B cell (primary cell): ENCODE measurements at regions of chr4 and their contacts with region 1.

Region 1: GRCh38 chr4:86043755-86044592 is 315.9 kb downstream of the MAPK10 start:
- DNase-seq: peak; percentile 69
- ATAC-seq: peak; percentile 51
- H3K4me3 ChIP-seq: no peak overlapping the region
- H3K4me3 Mint-ChIP-seq: no peak overlapping the region
- H3K27ac ChIP-seq: no peak overlapping the region
- H3K27ac Mint-ChIP-seq: no peak overlapping the region
- H3K4me1 ChIP-seq: no peaks in the 10 kb centered on the region
- H3K4me1 Mint-ChIP-seq: no peaks in the 10 kb centered on the region
- H3K27me3 ChIP-seq: no peaks in the 10 kb centered on the region
- H3K27me3 Mint-ChIP-seq: no peaks in the 10 kb centered on the region
- CTCF ChIP-seq: peak; percentile 89

Region 2: DNA sequence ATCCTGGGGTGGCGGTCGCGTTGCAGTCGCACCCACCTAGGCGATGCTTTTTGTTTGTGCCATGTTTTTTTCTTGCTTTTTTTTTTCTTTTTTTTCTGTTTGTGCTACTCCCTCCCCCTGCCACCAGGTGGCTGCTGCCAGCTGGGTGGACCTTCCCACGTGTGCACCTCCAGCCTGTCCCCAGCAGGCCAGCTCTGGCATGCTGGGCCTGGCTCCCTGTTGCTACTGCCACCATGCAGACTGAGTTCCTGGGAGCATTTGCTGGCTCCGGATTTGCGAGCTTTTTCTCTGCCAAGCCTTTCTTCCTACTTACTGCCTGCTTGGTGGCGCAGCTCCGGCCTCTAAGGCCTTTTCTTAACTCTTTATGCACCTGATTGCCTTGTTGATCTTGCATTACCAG is 916.3 kb before region 1 on chr4:
- CTCF ChIA-PET with region 1: interaction called, 4 read pairs
- POLR2A ChIA-PET with region 1: no interaction called
- intact Hi-C with region 1: loop called (anchors 5 kb)
- DNase-seq: peak; percentile 50
- ATAC-seq: peak; percentile 58
- H3K4me3 ChIP-seq: no peak overlapping the region
- H3K4me3 Mint-ChIP-seq: no peak overlapping the region
- H3K27ac ChIP-seq: no peak overlapping the region
- H3K27ac Mint-ChIP-seq: no peak overlapping the region
- H3K4me1 ChIP-seq: no peaks in the 10 kb centered on the region
- H3K4me1 Mint-ChIP-seq: peaks cover 2% of the 10 kb centered on the region
- H3K27me3 ChIP-seq: no peaks in the 10 kb centered on the region
- H3K27me3 Mint-ChIP-seq: peaks cover 7% of the 10 kb centered on the region
- CTCF ChIP-seq: peak; percentile 70

Region 3: DNA sequence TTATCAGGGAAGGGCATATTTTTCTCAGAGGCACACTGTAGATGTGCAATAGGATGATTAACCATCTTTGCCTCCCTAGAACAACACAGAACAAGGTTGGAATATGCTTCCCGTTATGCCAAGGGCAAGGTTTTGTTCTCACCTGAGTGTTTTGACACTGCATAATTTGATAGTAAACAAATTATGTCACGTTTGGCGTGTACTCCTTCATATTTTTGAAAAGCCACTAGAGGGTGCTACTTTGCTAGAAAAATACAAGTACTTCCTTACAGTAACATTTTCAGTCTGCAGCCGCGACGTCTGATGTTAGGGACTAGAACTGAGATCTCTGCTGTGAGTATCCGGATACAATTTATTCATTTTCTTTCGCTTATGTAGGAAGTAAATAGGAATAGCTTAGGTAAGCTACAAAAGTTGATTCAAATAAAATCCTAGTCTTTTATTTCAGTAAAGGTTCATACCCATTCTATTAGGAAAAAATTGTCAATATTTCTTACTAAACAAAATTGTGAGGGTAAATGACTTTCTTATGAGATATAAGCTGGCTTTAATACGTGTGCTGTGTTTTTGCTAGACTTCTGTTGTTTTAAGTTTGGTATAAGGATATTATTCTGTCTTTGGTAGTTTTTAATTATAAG is 896.4 kb before region 1 on chr4:
- CTCF ChIA-PET with region 1: interaction called, 60 read pairs
- POLR2A ChIA-PET with region 1: no interaction called
- intact Hi-C with region 1: loop called (anchors 1 kb)
- DNase-seq: peak; percentile 82
- ATAC-seq: peak; percentile 83
- H3K4me3 ChIP-seq: no peak overlapping the region
- H3K4me3 Mint-ChIP-seq: no peak overlapping the region
- H3K27ac ChIP-seq: no peak overlapping the region
- H3K27ac Mint-ChIP-seq: no peak overlapping the region
- H3K4me1 ChIP-seq: peaks cover 0 to 2% of the 10 kb centered on the region in 2 donors
- H3K4me1 Mint-ChIP-seq: peaks cover 6% of the 10 kb centered on the region
- H3K27me3 ChIP-seq: no peaks in the 10 kb centered on the region
- H3K27me3 Mint-ChIP-seq: no peaks in the 10 kb centered on the region
- CTCF ChIP-seq: peak; percentile 90

Region 4: GRCh38 chr4:85756938-85757337 is 287.0 kb before region 1 on chr4:
- CTCF ChIA-PET with region 1: interaction called, 3 read pairs
- POLR2A ChIA-PET with region 1: no interaction called
- intact Hi-C with region 1: loop called (anchors 2 kb)
- DNase-seq: no peak
- ATAC-seq: peak; percentile 36
- H3K4me3 ChIP-seq: no peak overlapping the region
- H3K4me3 Mint-ChIP-seq: no peak overlapping the region
- H3K27ac ChIP-seq: no peak overlapping the region
- H3K27ac Mint-ChIP-seq: no peak overlapping the region
- H3K4me1 ChIP-seq: peaks cover 0 to 7% of the 10 kb centered on the region in 2 donors
- H3K4me1 Mint-ChIP-seq: peaks cover 14% of the 10 kb centered on the region
- H3K27me3 ChIP-seq: no peaks in the 10 kb centered on the region
- H3K27me3 Mint-ChIP-seq: no peaks in the 10 kb centered on the region
- CTCF ChIP-seq: peak; percentile 31

Region 5: DNA sequence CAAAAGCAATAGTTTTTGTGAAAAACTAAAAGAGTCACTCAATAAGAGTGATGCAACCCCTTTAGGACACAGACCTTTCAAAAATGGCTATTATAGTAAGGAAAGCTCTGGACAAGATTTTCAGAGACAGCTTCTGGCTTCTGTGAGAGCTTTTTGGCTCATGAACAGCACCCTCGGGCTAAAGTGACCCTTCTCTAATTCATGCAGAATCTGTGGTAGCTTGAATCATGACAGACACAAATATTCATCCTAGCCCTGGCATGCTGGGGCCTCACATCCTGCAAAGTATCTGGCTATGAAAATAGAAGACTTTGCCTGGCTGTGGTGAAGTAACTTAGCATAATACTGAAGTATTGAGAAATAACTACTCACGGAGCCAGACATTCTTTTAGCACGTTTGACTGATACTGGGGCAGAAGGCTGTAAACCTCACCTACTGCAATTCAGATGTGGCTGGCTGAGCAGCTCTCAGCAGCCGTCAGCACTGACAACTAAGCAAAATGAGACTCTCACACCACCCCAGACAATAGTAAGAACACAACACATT is 11.4 kb before region 1 on chr4:
- CTCF ChIA-PET with region 1: interaction called, 16 read pairs
- POLR2A ChIA-PET with region 1: no interaction called
- intact Hi-C with region 1: no loop called
- DNase-seq: no peak
- ATAC-seq: no peak
- H3K4me3 ChIP-seq: no peak overlapping the region
- H3K4me3 Mint-ChIP-seq: no peak overlapping the region
- H3K27ac ChIP-seq: no peak overlapping the region
- H3K27ac Mint-ChIP-seq: no peak overlapping the region
- H3K4me1 ChIP-seq: no peaks in the 10 kb centered on the region
- H3K4me1 Mint-ChIP-seq: no peaks in the 10 kb centered on the region
- H3K27me3 ChIP-seq: peaks cover 0 to 15% (median 3%) of the 10 kb centered on the region in 4 experiments
- H3K27me3 Mint-ChIP-seq: peaks cover 31% of the 10 kb centered on the region
- CTCF ChIP-seq: no peak

Region 6: DNA sequence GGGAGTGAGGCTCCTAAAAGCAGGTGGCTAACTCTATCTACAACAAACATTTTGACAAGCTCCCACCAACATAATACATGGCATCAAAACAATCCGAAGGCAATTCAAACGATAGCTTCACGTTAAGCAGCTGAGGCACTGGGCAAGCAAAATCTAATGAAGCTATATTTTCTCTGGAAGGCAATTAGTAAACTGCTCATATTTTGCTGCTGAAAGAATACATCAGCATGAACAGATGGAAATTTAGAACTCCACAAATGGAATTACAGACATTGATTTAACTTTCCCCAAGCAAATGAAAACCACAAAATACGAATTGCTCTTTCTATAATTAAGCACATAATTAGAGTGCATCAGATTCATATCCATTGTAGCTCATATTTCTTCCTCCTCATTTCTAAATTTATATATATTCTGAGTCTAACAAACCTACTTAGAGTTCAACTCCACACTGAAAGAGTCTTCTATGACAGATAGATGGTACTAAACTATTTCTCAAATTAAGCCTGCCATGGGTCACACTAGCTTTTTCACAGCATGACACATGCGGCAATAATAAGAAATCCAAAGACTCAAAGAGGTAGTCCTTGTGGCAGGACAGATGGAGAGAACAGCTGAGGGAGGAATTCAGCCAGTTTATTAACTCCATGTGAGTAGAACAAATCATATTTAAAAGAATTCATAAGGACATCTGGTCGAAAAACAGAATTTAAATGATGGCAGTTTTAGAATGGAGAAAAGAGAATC is 10.5 kb after region 1 on chr4:
- CTCF ChIA-PET with region 1: interaction called, 15 read pairs
- POLR2A ChIA-PET with region 1: no interaction called
- intact Hi-C with region 1: no loop called
- DNase-seq: no peak
- ATAC-seq: no peak
- H3K4me3 ChIP-seq: no peak overlapping the region
- H3K4me3 Mint-ChIP-seq: no peak overlapping the region
- H3K27ac ChIP-seq: no peak overlapping the region
- H3K27ac Mint-ChIP-seq: no peak overlapping the region
- H3K4me1 ChIP-seq: no peaks in the 10 kb centered on the region
- H3K4me1 Mint-ChIP-seq: no peaks in the 10 kb centered on the region
- H3K27me3 ChIP-seq: no peaks in the 10 kb centered on the region
- H3K27me3 Mint-ChIP-seq: peaks cover 11% of the 10 kb centered on the region
- CTCF ChIP-seq: no peak

Region 7: GRCh38 chr4:86769794-86770193 is 725.8 kb after region 1 on chr4:
- CTCF ChIA-PET with region 1: no interaction called
- POLR2A ChIA-PET with region 1: no interaction called
- intact Hi-C with region 1: no loop called
- DNase-seq: no peak
- ATAC-seq: no peak
- H3K4me3 ChIP-seq: no peak overlapping the region
- H3K4me3 Mint-ChIP-seq: no peak overlapping the region
- H3K27ac ChIP-seq: no peak overlapping the region
- H3K27ac Mint-ChIP-seq: no peak overlapping the region
- H3K4me1 ChIP-seq: no peaks in the 10 kb centered on the region
- H3K4me1 Mint-ChIP-seq: no peaks in the 10 kb centered on the region
- H3K27me3 ChIP-seq: no peaks in the 10 kb centered on the region
- H3K27me3 Mint-ChIP-seq: peaks cover 10% of the 10 kb centered on the region
- CTCF ChIP-seq: no peak